Activated B cell treated with CpG ODN at 0.5 μM for 24 hours (primary cell): ENCODE measurements at regions of chr6 and their contacts with region 1.

Region 1: DNA sequence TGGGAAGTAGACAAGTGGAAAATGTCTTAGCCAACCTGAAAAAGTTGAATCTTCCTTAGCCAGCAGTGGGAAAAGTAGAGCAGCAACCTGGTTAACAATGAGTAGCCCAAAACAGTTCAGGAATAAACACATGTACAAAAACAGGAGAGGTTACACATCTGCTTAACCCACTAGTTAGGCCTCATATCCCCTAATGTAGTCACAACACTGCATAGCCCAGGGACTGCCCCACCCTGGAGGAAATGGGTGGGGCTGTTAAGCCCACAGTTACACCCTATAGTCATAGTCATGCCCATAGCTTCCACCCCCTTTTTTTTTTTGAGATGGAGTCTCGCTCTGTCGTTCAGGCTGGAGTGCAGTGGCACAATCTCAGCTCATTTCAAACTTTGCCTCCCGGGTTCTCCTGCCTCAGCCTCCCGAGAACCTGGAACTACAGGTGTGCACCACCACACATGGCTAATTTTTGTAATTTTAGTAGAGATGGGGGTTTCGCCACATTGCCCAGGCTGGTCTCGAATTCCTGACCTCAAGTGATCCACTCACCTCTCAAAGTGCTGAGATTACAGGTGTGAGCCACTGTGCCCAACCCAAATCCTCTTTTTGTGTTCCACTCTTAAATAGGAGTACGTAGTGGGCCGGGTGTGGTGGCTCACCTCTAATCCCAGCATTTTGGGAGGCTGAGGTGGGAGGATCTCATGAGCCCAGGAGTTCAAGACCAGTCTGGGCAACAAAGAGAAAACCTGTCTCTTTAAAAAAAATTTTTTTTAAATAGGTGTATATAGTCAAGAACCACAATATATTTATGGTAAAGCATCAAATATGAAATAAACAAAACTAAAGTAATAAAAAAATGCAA is 24.5 kb downstream of the ILRUN start:
- DNase-seq: peak; percentile 49
- ATAC-seq: peak; percentile 94
- H3K4me3 Mint-ChIP-seq: peak overlapping the region; percentile 74
- H3K27ac Mint-ChIP-seq: peak overlapping the region; percentile 97
- H3K4me1 Mint-ChIP-seq: peaks cover 78% of the 10 kb centered on the region
- H3K27me3 Mint-ChIP-seq: no peaks in the 10 kb centered on the region
- CTCF ChIP-seq: no peak

Region 2: DNA sequence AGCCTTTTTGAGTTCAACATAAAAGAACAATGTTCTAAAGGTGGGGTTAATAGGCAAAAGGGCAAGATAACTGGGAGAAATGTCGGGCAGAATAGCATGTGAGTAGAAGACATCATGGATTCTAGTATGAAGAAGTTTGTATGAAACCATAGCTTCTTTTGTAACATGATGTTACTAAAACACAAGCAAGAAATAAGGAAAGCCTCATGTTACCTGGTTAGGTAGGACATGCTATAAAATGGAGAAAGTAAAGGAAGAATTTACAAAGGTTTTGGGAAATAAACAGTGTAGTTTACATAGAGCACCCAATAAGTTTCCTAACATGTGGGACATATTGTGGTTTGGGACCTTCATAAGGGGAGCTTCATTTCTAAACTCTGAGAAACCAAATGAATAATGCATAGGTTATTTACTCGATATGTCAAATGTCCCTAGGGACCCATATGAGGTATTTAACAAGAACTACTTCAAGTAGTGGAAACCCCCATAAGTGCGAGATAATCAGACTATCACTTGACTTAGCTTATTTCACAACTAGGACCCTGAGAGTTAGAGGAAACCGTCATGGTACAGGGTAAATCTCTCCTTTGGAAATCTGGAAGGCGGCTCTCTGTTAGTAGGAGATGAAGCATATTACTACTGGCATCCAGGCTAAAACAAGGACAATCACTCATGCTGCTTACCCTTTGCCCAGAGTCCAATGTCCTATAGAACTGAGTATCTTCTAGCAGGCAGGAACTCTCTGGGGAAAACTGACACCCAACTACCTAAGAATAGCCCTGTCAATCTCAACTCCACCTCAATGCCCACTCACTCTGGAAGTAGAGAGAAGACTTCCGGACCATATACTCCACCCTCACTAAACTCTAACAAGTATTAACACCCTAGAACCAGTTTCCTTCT is 32.9 kb before region 1 on chr6:
- CTCF ChIA-PET with region 1: no interaction called
- POLR2A ChIA-PET with region 1: interaction called, 17 read pairs
- intact Hi-C with region 1: loop called (anchors 2 kb)
- DNase-seq: no peak
- ATAC-seq: peak; percentile 84
- H3K4me3 Mint-ChIP-seq: peak overlapping the region; percentile 72
- H3K27ac Mint-ChIP-seq: peak overlapping the region; percentile 86
- H3K4me1 Mint-ChIP-seq: peaks cover 38% of the 10 kb centered on the region
- H3K27me3 Mint-ChIP-seq: no peaks in the 10 kb centered on the region
- CTCF ChIP-seq: no peak

Region 3: GRCh38 chr6:34644716-34645115 is 27.3 kb before region 1 on chr6:
- CTCF ChIA-PET with region 1: no interaction called
- POLR2A ChIA-PET with region 1: interaction called, 17 read pairs
- intact Hi-C with region 1: loop called (anchors 2 kb)
- DNase-seq: no peak
- ATAC-seq: no peak
- H3K4me3 Mint-ChIP-seq: no peak overlapping the region
- H3K27ac Mint-ChIP-seq: peak overlapping the region; percentile 0
- H3K4me1 Mint-ChIP-seq: peaks cover 25% of the 10 kb centered on the region
- H3K27me3 Mint-ChIP-seq: no peaks in the 10 kb centered on the region
- CTCF ChIP-seq: no peak

Region 4: GRCh38 chr6:34656378-34657036 is 15.5 kb before region 1 on chr6:
- CTCF ChIA-PET with region 1: interaction called, 3 read pairs
- POLR2A ChIA-PET with region 1: interaction called, 87 read pairs
- intact Hi-C with region 1: loop called (anchors 2 kb)
- DNase-seq: no peak
- ATAC-seq: peak; percentile 79
- H3K4me3 Mint-ChIP-seq: peak overlapping the region; percentile 74
- H3K27ac Mint-ChIP-seq: peak overlapping the region; percentile 92
- H3K4me1 Mint-ChIP-seq: peaks cover 58% of the 10 kb centered on the region
- H3K27me3 Mint-ChIP-seq: no peaks in the 10 kb centered on the region
- CTCF ChIP-seq: no peak

Region 5: GRCh38 chr6:34904990-34905613 is 233.1 kb after region 1 on chr6:
- CTCF ChIA-PET with region 1: no interaction called
- POLR2A ChIA-PET with region 1: interaction called, 10 read pairs
- intact Hi-C with region 1: no loop called
- DNase-seq: no peak
- ATAC-seq: no peak
- H3K4me3 Mint-ChIP-seq: no peak overlapping the region
- H3K27ac Mint-ChIP-seq: no peak overlapping the region
- H3K4me1 Mint-ChIP-seq: no peaks in the 10 kb centered on the region
- H3K27me3 Mint-ChIP-seq: no peaks in the 10 kb centered on the region
- CTCF ChIP-seq: no peak